AG04449 (cell line): ENCODE measurements at regions of chr2 and their contacts with region 1.

Region 1: GRCh38 chr2:9770308-9771100 is 72.8 kb upstream of the TAF1B start:
- DNase-seq: peak; percentile 10
- H3K4me3 ChIP-seq: no peak overlapping the region
- CTCF ChIP-seq: peak; percentile 76

Region 2: DNA sequence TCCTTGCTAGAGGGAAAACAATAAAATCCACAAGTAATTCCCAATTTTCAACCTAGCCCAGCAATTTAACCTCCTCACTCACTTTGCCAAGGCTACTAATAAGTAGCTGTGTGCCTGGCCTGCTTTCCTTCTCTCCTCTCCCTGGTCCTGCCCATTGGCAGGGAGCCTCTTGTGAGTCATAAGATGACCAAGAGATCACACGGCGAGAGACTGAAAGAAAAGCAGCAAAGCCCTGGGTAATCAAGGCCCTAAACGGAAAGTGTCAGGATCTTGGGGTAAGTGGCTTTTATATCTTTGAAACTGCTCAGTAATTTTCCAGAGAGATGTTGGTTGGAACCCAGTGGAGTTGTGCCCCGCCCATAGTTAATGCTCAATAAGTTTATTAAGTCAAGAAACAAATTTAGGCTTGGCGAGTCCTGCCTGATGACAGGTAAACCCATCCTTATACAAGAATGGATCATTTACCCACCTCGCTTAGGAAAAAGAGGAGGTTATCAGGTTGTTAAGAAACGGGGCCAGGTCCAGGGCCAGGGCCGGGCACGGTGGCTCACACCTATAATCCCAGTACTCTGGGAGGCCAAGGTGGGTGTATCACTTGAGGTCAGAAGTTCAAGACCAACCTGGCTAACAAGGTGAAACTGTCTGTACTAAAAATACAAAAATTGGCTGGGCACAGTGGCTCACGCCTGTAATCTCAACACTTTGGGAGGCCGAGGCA is 204.9 kb before region 1 on chr2:
- CTCF ChIA-PET with region 1: interaction called, 17 read pairs
- POLR2A ChIA-PET with region 1: no interaction called
- DNase-seq: peak; percentile 84
- H3K4me3 ChIP-seq: no peak overlapping the region; the same call in 1 of the 2 replicates
- CTCF ChIP-seq: no peak

Region 3: GRCh38 chr2:9739531-9739964 is 31.0 kb before region 1 on chr2:
- CTCF ChIA-PET with region 1: interaction called, 16 read pairs
- POLR2A ChIA-PET with region 1: no interaction called
- DNase-seq: no peak
- H3K4me3 ChIP-seq: no peak overlapping the region; the same call in 1 of the 2 replicates
- CTCF ChIP-seq: no peak

Region 4: GRCh38 chr2:9753276-9753600 is 17.3 kb before region 1 on chr2:
- CTCF ChIA-PET with region 1: interaction called, 180 read pairs
- POLR2A ChIA-PET with region 1: interaction called, 3 read pairs
- DNase-seq: peak; percentile 76
- H3K4me3 ChIP-seq: peak overlapping the region; percentile 33
- CTCF ChIP-seq: no peak

Region 5: DNA sequence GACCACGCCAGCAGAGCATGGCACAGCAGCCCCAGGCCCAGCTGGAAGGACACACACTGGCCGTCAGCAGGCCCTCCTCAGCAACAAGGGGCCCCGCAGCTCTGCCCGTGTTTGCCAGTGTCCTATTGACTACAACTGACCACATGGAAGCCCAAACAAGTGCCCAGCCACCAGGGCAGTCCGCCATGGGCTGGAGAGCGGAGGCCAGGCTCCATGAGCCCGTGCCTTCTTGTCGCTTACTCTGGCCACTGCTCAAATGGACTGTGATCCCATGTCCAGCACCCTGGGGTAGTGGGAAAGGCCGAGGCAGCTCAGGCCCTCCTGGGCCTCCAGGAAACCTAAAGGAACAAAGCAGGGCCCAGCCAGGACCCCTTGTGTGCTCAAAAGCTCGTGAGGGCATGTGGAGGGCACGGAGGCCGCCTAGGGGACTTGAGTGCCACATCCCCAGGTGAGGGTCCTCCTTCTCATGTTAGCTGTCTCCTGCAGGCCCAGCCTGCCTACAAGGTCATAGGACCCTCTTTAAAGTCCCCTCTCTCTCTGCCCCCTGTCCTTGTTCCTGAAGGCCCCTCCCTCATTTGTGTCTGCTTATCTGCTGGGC is 19.0 kb after region 1 on chr2:
- CTCF ChIA-PET with region 1: interaction called, 121 read pairs
- POLR2A ChIA-PET with region 1: no interaction called
- DNase-seq: no peak
- H3K4me3 ChIP-seq: no peak overlapping the region
- CTCF ChIP-seq: no peak

Region 6: DNA sequence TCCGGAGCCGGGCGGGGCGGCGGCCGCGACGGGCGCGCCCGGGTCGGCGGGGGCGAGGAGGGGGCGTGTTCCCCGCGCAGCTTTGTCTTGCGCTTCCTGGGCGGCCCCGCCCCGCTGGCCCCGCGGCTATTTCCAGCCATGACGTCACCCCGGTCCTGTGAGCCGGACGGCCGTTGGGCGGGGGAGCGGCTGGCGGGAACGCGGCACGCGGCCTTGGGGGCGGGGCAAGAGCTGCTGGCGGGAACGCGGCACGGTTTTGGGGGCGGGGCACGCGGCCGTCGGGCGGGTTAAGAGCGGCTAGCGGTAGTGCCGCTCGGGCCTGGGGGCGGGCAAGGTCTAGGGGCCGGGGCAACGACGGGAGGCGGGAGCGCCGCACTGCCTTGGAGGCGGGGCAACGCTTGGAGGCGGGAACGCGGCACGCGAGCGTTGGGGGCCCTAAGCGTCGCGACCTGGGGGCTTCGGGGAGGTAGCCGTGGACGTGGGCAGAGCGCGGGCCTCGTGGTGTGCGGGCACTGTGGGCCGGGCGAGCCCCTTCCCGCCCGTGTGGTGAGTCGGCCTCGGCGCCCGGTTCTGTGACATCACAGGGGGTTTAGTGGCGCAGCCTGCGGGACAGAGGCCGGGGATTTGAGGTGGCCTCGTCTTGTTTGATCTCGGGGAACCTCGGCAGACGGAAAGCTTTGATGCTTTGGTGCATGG is 273.6 kb after region 1 on chr2:
- CTCF ChIA-PET with region 1: interaction called, 87 read pairs
- POLR2A ChIA-PET with region 1: no interaction called
- DNase-seq: no peak
- H3K4me3 ChIP-seq: peak overlapping the region; percentile 64
- CTCF ChIP-seq: no peak